Activated naive CD4-positive, alpha-beta T cell treated with anti-CD3 and anti-CD28 coated beads for 36 hours (primary cell): ENCODE measurements at regions of chr6 and their contacts with region 1.

Region 1: GRCh38 chr6:144215932-144216667 is 65.8 kb downstream of the STX11 start:
- DNase-seq: peak; percentile 93
- H3K4me3 Mint-ChIP-seq: peak overlapping the region; percentile 79
- H3K27ac Mint-ChIP-seq: peak overlapping the region; percentile 96
- H3K4me1 Mint-ChIP-seq: peaks cover 31% of the 10 kb centered on the region
- H3K27me3 Mint-ChIP-seq: peaks cover 2% of the 10 kb centered on the region

Region 2: DNA sequence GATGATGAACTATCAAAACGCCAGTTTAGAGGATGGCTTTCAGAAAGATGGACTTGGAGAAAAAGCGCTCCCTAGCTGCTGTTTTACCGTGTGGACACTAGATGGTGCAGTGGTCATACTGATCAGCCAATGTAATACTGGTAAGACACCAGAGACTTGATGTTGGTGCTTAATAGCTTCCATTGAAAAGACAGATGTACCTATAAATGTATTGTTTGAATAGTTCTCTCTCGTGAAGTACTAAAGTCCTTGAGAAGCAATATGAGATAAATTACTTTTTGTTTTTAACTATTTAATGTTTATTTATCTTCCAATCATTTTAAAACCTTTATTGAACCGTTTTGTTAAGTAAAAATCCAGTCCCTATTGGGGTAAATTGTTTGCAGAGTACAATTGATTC is 640.7 kb before region 1 on chr6:
- CTCF ChIA-PET with region 1: interaction called, 6 read pairs
- intact Hi-C with region 1: loop called (anchors 1 kb)
- DNase-seq: peak; percentile 69
- H3K4me3 Mint-ChIP-seq: no peak overlapping the region
- H3K27ac Mint-ChIP-seq: no peak overlapping the region
- H3K4me1 Mint-ChIP-seq: no peaks in the 10 kb centered on the region
- H3K27me3 Mint-ChIP-seq: no peaks in the 10 kb centered on the region

Region 3: DNA sequence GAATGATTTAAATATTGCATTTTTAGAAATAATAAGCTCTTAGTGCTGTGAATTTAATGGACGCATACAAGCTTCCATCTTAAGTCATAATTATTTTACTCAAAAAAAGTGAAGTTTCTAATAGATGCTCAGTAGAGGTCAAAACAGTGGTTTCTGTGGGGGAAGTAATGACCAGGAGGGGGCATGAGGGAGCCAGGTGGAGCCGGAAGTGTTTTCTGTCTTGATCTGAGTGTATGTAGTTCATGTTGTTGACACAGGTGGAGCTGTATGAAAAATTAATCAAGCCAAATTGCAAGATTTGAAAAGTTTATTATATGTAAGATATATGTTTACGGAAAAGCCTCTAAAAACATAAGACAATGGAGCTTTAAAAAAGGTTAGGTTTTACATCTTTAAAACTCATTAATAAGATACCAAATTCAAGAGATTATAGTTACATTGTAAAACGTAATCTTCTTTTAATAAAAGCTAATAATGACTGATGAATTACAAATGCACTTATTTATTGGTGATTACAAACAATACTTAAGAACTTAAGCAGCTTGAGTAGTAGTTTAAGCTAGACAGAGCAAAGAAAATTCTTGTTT is 276.0 kb before region 1 on chr6:
- CTCF ChIA-PET with region 1: interaction called, 21 read pairs
- intact Hi-C with region 1: loop called (anchors 1 kb)
- DNase-seq: peak; percentile 76
- H3K4me3 Mint-ChIP-seq: no peak overlapping the region
- H3K27ac Mint-ChIP-seq: no peak overlapping the region
- H3K4me1 Mint-ChIP-seq: no peaks in the 10 kb centered on the region
- H3K27me3 Mint-ChIP-seq: no peaks in the 10 kb centered on the region

Region 4: GRCh38 chr6:144104898-144105487 is 111.1 kb before region 1 on chr6:
- CTCF ChIA-PET with region 1: interaction called, 105 read pairs
- intact Hi-C with region 1: loop called (anchors 1 kb)
- DNase-seq: peak; percentile 48
- H3K4me3 Mint-ChIP-seq: no peak overlapping the region
- H3K27ac Mint-ChIP-seq: no peak overlapping the region
- H3K4me1 Mint-ChIP-seq: peaks cover 11% of the 10 kb centered on the region
- H3K27me3 Mint-ChIP-seq: no peaks in the 10 kb centered on the region

Region 5: DNA sequence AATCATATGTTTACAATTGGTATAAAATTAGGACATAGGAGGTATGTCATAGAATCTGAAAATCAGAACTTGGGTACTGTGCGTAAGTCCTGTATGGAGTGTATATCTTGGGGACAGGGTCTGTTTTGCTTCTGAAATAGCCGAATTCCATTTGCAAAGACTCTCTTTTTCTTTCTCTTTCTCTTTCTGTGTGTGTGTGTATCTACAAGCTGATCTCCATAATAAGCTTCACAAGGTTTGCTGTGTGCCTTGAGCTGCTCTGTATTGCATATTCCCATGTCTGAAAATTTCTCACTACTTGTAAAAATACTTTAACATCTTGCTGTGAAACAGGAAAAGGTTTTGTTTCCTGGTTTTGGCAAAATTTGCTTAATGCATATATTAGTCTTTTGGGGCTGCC is 36.3 kb before region 1 on chr6:
- CTCF ChIA-PET with region 1: interaction called, 3 read pairs
- intact Hi-C with region 1: loop called (anchors 1 kb)
- DNase-seq: no peak
- H3K4me3 Mint-ChIP-seq: no peak overlapping the region
- H3K27ac Mint-ChIP-seq: no peak overlapping the region
- H3K4me1 Mint-ChIP-seq: peaks cover 55% of the 10 kb centered on the region
- H3K27me3 Mint-ChIP-seq: no peaks in the 10 kb centered on the region

Region 6: DNA sequence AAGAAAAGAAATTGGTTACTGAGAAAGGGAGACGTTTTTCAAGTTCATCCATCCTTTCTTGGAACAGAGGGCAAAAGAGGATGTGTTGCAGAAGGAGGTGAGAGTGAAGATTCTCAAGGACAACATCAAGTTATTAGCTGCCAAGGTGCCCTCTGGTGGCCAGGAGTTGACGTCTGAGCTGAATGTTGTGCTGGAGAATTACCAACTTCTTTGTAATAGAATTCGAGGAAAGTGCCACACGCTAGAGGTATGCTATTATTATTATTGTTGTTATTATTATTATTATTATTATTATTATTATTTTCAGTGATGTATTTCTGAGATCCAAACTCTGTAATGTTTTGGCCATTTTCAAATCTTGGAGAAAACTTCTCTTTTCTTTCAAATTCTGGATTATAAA is 266.0 kb after region 1 on chr6:
- CTCF ChIA-PET with region 1: interaction called, 27 read pairs
- intact Hi-C with region 1: loop called (anchors 1 kb)
- DNase-seq: peak; percentile 88
- H3K4me3 Mint-ChIP-seq: no peak overlapping the region
- H3K27ac Mint-ChIP-seq: no peak overlapping the region
- H3K4me1 Mint-ChIP-seq: peaks cover 3% of the 10 kb centered on the region
- H3K27me3 Mint-ChIP-seq: no peaks in the 10 kb centered on the region